Left ventricle myocardium superior (tissue), 1 donor: ENCODE measurements at regions of chr16 and their contacts with region 1.

Region 1: DNA sequence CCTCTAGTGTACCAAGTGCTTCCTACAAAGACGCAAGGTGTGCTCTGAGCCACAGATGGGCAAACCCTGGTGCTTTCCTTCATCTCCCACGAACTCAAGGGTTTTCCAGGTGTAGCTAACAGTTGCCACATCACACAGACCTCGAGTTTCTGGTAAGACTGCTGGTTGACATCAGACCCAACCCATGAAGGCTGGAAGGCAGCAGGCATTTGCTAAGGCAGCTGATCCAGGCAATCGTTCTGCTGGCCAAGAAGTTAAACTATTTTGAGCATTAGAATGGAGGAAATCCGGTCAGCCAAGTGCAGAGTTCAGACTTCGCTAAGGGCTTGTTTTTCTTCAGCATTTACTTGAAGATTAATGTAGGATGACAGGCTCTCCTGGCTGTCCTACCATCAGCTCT is 11.5 kb downstream of the HAS3 start:
- DNase-seq: no peak
- ATAC-seq: no peak

Region 2: DNA sequence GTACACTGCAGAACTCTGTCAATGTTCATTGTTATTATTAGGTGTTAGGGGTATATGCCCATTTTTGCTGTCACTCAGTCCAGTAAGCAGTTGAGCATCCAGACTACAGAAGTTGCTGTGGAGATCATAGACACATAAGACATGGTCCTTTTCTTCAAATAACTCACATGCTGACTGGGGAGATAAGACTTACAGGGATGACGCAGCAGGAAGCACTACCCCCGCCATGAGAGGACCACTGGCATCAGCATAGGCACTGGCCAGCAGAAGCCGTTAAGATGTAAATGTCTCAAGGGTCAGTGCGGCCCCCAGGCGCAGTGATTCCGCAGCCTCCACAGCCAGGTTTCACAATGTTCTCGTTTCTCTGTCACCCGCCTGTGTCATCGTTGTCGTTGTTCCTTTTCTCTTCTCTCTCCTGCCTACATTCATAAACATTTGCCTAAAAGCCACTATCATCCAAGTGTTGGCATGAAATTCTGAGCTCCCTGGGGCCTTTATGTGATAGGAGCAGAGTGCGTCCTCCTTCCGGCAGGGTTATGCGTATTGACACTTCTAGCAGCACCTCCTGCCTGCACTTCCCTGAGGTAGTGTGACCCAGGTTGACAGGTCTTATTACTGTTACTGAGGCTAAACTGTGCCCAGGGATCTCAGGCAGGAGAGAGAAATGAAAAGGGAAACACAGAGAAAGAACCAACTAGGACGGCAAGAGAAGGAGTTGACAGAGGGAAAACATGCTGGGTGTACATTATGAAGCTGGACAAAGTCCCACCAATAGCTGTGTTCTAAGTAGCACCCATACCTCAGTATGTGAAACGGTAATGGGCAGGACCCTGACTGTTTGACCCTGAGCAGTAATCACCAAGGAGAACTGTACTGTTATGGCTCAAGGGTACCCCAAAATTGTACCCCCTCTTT is 255.7 kb before region 1 on chr16:
- intact Hi-C with region 1: no loop called
- DNase-seq: no peak
- ATAC-seq: no peak

Region 3: DNA sequence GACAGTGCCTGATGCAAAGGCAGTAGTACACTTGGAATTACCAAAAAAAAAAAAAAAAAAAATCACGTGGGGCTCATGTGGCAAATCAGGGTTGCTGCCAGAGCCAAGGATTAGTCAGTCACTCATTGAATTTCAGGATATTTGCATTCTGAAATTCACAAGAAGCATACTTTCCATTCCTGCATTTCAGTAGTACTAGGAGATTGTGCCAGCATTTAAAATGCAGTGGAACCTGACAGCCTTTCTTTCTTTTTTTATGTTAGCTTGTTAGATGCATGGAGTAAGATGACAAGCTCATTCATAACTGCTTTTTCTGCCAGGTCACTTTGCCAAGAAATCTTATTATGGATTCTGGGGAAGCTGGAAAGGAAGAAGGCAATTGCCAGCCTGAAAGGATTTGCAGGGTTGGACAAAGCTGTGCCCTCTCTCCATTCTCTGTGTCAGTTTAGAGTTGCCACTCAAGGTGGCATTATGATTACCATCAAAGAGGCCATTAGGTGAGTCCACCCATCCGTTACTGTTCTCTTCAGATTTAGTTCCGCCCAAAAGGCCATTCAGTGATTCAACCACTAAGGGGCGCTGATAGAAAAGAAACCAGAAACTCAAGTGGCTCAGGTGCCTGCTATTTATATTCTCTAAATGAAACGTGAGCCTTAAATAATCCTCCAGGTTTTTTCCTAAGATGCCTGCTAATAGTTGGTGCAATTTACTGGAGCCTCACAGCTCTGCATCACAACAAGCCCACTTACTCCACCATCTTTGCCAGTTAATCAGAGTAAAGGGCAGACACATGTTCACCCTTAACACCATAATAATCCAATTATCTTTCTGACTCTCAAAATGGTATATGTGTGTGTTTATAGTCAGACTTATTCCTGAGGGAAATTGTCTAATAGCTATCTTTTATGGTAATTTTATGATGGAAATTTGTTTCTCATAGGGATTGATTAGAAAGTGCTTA is 214.6 kb before region 1 on chr16:
- intact Hi-C with region 1: loop called (anchors 5 kb)
- DNase-seq: no peak
- ATAC-seq: peak; percentile 60

Region 4: DNA sequence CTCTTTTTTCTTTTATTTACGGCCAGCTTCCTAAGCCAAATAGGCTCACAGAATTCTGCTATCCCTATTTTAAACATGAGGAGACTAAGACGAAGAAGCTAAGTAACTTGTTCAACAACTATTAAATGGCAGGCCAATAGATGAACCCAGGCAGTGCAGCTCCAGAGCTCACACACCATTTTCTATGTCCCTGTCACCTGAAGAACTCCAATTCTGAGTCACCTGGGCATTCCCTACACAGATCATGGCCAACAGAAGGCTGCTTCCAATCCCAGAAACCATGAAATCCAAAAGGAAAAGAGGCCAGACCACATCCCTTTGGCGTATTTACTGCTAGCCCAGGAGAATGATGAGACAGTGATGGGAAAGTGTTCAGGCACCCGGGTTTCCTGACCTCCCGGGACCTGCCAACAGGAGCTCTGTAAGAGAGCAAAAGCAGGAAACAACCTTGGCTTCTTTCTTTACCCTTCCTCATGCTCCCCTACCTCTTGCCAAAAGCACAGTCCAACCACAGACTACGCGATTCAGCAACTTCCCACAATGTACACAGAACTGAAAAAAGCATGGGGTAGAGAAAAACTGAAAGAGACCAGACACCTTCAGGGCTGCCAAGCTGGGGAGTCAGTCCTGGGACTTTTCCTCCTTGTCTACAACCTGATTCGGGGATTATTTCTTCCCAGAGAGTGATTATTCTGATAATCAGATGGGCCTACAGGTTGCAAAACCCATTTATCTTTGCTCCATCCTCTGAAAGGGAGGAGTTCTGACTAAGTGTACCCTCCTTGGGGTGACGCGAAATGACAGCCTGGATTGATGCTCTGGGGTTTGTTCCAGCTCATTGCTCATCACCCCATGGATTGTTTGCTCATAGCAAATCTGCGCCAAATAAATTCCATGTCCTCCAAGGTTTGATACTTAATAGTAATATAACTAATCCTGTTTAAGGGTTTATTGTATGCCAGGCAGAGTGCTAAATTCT is 59.2 kb before region 1 on chr16:
- intact Hi-C with region 1: no loop called
- DNase-seq: no peak
- ATAC-seq: no peak